ENCODE measurements at regions of chr6 and their contacts with region 1.

Region 1: DNA sequence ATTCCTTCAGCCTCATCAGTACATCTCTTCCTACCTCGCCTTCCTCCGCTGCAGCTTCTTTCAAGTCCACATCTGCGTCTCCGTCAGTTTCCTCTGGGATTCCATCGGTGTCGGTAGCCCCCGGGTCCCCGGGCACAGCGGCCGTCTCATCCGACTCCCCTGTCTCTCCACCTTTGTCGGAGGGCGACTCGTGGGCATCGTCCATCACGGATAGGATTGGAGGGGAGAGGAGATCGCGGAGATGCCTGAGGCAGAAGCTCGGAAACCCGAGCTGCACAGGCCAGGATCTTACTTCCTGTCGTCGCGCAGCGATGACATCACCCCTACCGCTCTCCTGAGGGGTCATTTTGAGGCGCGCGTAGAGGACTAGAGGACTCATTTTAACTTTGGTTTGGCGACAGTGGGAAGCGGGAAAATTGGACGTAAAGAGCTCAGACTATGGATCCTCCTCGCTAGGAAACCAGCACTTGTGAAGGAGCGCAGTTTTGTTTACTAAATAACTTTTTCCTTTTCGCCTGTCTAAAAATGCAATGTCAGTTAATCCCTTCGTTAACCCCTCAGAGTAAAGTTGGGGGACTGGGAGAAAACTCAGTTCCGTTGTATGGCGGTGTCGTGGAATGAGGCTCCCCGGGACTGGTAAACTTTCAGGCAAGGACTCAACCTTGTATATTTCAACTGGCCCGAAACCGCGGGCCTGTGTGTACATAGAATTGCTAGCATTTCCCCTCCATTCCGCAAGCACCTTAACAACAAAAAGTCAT is at the start of gene TAF11:
- DNase-seq: peak; percentile 92 to 95
- ATAC-seq: peak; percentile 92 to 98 (median 94)
- H3K4me3 ChIP-seq: peak within 1 kb of the TSS; percentile 62 to 92 (median 78)
- H3K27ac ChIP-seq: peak within 1 kb of the TSS; percentile 62 to 93 (median 87)
- H3K4me1 ChIP-seq: peaks cover 8 to 57% (median 35%) of the 10 kb centered on the region in 9 donors
- H3K27me3 ChIP-seq: no peaks in the 10 kb centered on the region
- CTCF ChIP-seq: no peak
- total RNA-seq, gene TAF11: 16.3 to 22.1 (median 17.6) TPM

Region 2: DNA sequence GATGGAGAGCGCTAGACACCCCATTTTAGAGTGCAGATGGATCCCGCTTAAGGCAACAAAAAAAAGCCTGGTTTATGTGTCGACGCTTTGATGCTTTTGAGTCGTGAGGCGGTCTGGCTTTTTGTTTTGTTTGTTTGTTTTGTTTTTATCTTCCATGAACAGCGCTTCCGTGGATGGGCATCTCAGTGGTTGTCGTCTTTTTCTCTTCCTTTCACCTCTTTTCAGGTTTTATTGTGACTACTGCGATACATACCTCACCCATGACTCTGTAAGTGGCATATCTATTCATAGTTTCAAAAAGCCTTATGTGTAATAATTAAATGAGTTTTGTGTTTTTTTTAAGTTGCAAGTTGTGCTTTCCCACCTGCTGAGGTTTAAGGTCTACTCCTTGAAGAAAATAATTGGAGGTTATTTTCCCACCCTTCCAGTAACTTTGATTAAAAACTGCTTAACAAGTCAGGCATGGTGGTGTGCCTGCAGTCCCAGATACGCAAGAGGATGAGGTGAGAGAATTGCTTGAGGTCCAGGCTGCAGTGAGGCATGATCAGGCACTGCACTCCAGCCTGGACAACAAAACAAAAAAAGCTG is 130.2 kb before region 1 on chr6:
- intact Hi-C with region 1: loop called in 2 of 10 experiments (anchors 1 to 10 kb)
- DNase-seq: no peak
- ATAC-seq: no peak
- H3K4me3 ChIP-seq: peak overlapping the region; percentile 59 to 83 (median 76)
- H3K27ac ChIP-seq: peak overlapping the region; percentile 85 to 97 (median 94)
- H3K4me1 ChIP-seq: peaks cover 4 to 53% (median 34%) of the 10 kb centered on the region in 9 donors
- H3K27me3 ChIP-seq: no peaks in the 10 kb centered on the region
- CTCF ChIP-seq: no peak

Region 3: DNA sequence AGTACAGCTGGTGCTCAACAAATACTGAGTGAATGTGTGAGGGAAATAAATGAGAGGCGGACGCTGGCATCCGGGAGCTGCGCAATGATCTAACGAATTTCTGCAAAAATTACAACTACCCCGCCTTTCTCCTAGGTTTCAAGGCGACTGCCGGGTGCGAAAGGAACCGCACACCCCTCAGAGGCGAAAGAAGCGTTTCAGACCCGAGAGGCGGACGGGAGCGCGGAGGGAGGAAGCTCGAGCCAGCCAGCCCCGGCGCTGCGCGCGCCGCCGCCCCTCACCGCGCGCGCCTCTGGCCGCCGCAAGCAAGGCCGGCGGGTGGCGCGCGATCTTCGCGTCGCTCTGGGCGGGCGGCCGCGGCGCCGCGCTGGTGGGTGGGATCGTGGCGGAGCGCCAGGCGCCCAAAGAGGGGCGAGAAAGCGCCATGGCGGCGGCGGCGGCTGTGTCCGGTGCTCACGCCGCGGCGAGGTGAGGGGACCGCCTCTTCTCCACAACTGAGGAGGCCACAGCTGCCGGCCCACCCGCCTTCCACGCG is 96.2 kb before region 1 on chr6 and contains the start of gene BLTP3A:
- intact Hi-C with region 1: loop called in 1 of 10 experiments (anchors 1 kb)
- DNase-seq: peak; percentile 65 to 83
- ATAC-seq: peak; percentile 90 to 96 (median 94)
- H3K4me3 ChIP-seq: peak within 1 kb of the TSS; percentile 77 to 99 (median 96)
- H3K27ac ChIP-seq: peak within 1 kb of the TSS; percentile 82 to 98 (median 97)
- H3K4me1 ChIP-seq: peaks cover 4 to 35% (median 21%) of the 10 kb centered on the region in 9 donors
- H3K27me3 ChIP-seq: no peaks in the 10 kb centered on the region
- CTCF ChIP-seq: peak in 2 of 9 donors; percentile 20 to 24
- total RNA-seq, gene BLTP3A: 18.0 to 25.0 (median 21.2) TPM

Region 4: GRCh38 chr6:34955442-34955841 is 67.5 kb after region 1 on chr6:
- intact Hi-C with region 1: loop called in 5 of 10 experiments (anchors 5 to 10 kb)
- DNase-seq: no peak
- ATAC-seq: peak in 3 of 8 donors; percentile 24 to 44 (median 28)
- H3K4me3 ChIP-seq: no peak overlapping the region
- H3K27ac ChIP-seq: peak overlapping the region in 2 of 10 donors; percentile 37 to 74
- H3K4me1 ChIP-seq: peaks cover 3 to 79% (median 70%) of the 10 kb centered on the region in 9 donors
- H3K27me3 ChIP-seq: no peaks in the 10 kb centered on the region
- CTCF ChIP-seq: no peak

Region 5: GRCh38 chr6:34964564-34964963 is 76.6 kb after region 1 on chr6:
- intact Hi-C with region 1: loop called in 6 of 10 experiments (anchors 5 to 10 kb)
- DNase-seq: peak in 1 of 2 donors; percentile 61
- ATAC-seq: peak in 7 of 8 donors; percentile 49 to 68 (median 62)
- H3K4me3 ChIP-seq: no peak overlapping the region
- H3K27ac ChIP-seq: peak overlapping the region in 9 of 10 donors; percentile 9 to 73 (median 48)
- H3K4me1 ChIP-seq: peaks cover 0 to 68% (median 36%) of the 10 kb centered on the region in 9 donors
- H3K27me3 ChIP-seq: no peaks in the 10 kb centered on the region
- CTCF ChIP-seq: no peak

Region 6: GRCh38 chr6:34973547-34974248 is 85.8 kb after region 1 on chr6:
- intact Hi-C with region 1: loop called in 4 of 10 experiments (anchors 5 to 10 kb)
- DNase-seq: no peak
- ATAC-seq: no peak
- H3K4me3 ChIP-seq: no peak overlapping the region
- H3K27ac ChIP-seq: no peak overlapping the region
- H3K4me1 ChIP-seq: no peaks in the 10 kb centered on the region
- H3K27me3 ChIP-seq: no peaks in the 10 kb centered on the region
- CTCF ChIP-seq: peak in 5 of 9 donors; percentile 22 to 34 (median 24)

Region 7: DNA sequence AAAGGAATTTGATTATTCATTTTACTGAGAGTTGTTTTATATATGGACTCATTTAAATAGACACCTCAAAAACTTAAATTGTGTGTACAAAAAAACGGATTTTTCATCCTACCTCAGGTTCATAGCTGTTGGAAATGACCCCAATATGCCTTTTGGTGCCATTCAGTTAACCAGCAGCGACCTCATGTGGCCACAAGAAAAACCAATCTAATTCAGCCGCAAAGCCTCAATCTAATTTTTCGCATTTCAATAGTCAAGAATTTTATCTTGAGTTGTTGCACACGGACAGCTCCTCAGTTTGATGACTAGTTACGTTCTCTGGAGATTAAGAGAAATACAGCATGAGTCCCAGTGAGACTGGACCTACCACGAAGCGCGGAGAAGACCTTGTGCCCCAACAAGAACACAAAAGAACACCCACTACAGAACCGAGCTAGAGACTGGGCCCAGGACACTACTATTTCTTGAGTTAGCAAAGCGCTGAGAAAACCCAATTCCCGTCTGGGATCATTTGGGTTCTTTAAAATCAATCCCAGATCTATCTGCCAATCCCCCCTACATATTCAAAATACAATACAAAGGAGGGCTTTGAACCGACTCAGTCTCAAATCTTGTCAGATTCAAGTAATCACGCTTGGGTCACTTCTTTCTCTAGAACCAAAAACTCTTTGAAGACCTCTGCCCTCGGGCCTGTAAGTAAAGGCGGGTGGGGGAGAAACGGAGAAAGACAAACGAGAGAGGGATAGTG is 252.1 kb after region 1 on chr6:
- intact Hi-C with region 1: loop called in 3 of 10 experiments (anchors 5 to 10 kb)
- DNase-seq: peak in 1 of 2 donors; percentile 55
- ATAC-seq: peak in 6 of 8 donors; percentile 38 to 76 (median 63)
- H3K4me3 ChIP-seq: no peak overlapping the region
- H3K27ac ChIP-seq: no peak overlapping the region
- H3K4me1 ChIP-seq: peaks cover 0 to 26% (median 10%) of the 10 kb centered on the region in 9 donors
- H3K27me3 ChIP-seq: peaks cover 0 to 15% (median 0%) of the 10 kb centered on the region in 7 donors
- CTCF ChIP-seq: peak; percentile 63 to 92 (median 85)

Measured in heart right ventricle (tissue), 16 donors.